Caco-2 (cell line): ENCODE measurements at regions of chr3 and their contacts with region 1.

Region 1: DNA sequence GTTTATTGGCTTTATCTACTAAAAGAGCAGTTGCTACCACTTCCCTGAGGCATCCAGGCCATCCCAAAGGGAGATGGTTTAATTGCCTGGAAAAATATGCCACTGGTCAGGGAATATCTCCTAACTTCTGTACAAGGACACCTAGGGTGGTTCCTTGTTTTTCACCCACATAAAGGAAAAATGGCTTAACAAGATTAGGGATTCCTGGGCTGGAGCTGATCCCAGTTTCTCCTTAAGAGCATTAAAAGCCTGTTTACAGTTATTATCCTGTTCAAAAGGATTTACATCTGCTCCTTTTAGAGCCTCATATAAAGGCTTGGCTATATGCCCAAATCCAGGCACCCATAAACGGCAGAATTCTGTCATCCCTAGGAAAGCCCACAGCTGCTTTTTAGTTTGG is 70.2 kb upstream of the WNT7A start:
- DNase-seq: no peak
- H3K4me3 ChIP-seq: no peak overlapping the region
- H3K4me3 Mint-ChIP-seq: no peak overlapping the region
- H3K27ac Mint-ChIP-seq: no peak overlapping the region
- H3K4me1 ChIP-seq: peaks cover 30% of the 10 kb centered on the region
- H3K4me1 Mint-ChIP-seq: peaks cover 11% of the 10 kb centered on the region
- H3K27me3 ChIP-seq: no peaks in the 10 kb centered on the region
- H3K27me3 Mint-ChIP-seq: no peaks in the 10 kb centered on the region
- CTCF ChIP-seq: no peak

Region 2: DNA sequence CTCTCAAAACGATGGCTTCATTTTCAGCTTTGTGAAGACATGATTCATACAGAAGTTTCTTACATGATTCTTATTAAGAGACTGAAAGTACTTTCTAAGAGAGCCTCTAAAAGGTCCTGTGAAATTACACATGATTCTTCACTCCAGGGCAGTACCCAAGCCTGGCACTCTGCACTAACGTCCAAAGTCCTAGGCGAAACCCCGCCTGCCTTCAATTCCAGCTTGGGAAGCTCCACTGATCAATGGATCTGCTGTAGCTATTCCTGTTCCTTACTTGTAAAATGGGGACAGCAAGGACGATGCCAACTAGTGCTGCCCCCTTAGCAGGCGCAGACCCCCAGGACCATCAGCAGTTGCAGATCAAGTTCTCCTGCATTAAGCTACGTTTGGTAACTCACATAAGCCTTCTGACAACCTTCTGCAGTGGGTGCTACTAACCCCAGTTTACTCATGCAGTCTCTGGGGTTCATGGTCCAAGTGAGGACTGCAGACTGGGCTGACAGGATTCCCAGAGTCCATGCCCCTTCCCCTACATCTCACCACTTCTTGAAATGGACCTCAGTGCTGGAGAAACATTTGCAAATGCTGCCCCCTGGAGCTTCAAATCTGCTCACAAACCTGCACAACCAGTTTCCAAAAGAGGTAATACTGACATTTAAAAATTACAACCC is 164.1 kb after region 1 on chr3:
- CTCF ChIA-PET with region 1: interaction called, 3 read pairs
- POLR2A ChIA-PET with region 1: no interaction called
- intact Hi-C with region 1: loop called (anchors 1 kb)
- DNase-seq: peak; percentile 62 to 66
- H3K4me3 ChIP-seq: no peak overlapping the region
- H3K4me3 Mint-ChIP-seq: no peak overlapping the region
- H3K27ac Mint-ChIP-seq: no peak overlapping the region
- H3K4me1 ChIP-seq: peaks cover 8% of the 10 kb centered on the region; the same call in 1 of the 2 replicates
- H3K4me1 Mint-ChIP-seq: no peaks in the 10 kb centered on the region
- H3K27me3 ChIP-seq: no peaks in the 10 kb centered on the region
- H3K27me3 Mint-ChIP-seq: no peaks in the 10 kb centered on the region
- CTCF ChIP-seq: peak; percentile 42 to 68